Caco-2 (cell line): ENCODE measurements at regions of chr11 and their contacts with region 1.

Region 1: DNA sequence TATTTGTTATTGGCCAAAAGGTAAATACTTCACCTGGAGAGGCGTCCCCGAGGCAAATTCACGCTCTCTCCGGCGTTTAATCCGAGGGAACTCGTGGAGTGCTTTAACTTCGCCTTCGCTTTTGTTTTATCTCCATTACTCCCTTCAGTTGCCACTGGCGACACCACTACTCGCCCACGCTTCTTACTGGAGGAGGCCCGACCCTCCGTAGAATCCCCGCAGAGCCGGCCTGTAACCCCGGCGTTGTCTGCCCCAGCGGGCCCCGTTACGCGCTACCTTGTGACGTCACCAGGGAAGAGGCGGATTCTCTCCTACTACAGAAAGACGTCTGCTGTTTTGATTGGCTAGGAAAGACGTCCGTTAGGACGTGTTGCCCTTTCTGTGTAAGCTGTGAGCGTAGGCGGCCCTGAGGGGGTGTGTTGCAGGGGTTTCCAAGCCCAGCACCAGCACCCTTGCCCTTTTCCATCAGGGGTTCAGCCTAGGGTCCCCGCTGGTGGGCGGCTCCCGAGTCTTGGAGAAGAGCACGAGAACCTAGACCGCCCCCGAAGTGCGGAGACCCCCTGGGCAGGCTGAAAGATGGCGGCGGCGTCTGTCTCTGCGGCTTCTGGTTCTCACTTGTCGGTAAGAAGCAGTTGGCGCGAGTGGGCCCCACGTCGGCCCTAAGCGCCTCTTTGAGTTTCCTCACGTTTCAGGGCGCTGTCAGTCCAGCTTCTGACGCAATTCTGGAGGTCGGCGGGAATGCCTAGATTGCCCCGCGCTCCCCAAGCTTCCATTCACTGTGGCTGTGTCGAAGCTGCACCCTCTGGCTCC is at the start of gene CEP57:
- DNase-seq: peak; percentile 99
- H3K4me3 ChIP-seq: peak within 1 kb of the TSS; percentile 72
- H3K4me3 Mint-ChIP-seq: peak within 1 kb of the TSS; percentile 72
- H3K27ac Mint-ChIP-seq: peak within 1 kb of the TSS; percentile 100
- H3K4me1 ChIP-seq: peaks cover 19% of the 10 kb centered on the region; the same call in 1 of the 2 replicates
- H3K4me1 Mint-ChIP-seq: peaks cover 23% of the 10 kb centered on the region
- H3K27me3 ChIP-seq: no peaks in the 10 kb centered on the region
- H3K27me3 Mint-ChIP-seq: no peaks in the 10 kb centered on the region
- CTCF ChIP-seq: no peak
- total RNA-seq, gene CEP57: 117 and 125 TPM in 2 replicates

Region 2: DNA sequence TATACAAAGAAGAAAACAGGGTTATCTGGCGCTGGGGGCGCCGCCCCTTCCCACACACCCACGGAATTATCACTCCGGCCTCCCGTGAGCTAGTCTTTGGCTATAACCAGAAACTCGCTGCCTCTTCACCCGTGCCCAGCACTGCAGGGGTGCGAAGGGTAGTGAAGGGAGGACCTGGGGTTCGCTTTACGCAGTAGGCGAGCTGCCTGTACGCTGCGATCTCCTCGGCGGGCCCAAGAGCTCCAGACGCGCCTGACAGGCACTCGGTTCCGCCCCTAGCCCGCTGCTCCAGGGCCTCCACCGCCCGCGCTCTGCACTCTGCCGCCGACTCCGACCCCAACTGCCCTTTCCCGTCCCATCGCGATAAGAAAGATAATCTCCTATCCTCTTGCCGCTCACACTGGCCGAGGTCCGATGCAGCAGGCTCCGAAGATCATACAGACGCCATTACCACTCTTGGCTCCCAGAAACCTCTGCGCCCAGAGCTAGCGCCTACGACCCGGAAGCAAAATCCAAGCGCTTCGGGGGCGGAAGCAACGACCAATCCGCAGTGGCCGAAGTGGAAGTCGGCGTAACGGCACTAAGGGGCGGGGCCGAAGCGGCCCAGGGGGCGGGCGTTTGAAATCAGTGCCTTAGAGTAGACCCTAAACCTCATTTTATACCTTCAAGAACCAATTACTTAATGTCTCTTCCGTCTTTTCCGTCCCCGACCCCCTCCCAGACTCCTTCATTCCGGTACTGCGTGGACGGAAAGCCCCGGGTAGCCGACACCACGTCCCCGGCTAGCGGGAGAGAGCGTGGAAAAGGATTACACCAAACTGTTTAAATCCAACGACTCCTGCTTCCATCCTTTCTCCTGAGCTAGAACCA is 817.0 kb before region 1 on chr11 and contains the starts of genes CWC15 and KDM4D:
- CTCF ChIA-PET with region 1: no interaction called
- POLR2A ChIA-PET with region 1: interaction called, 8 read pairs
- intact Hi-C with region 1: loop called (anchors 2 kb)
- DNase-seq: peak; percentile 97
- H3K4me3 ChIP-seq: peak within 1 kb of the TSS; percentile 56
- H3K4me3 Mint-ChIP-seq: peak within 1 kb of the TSS; percentile 89
- H3K27ac Mint-ChIP-seq: peak within 1 kb of the TSS; percentile 94
- H3K4me1 ChIP-seq: peaks cover 9% of the 10 kb centered on the region; the same call in 1 of the 2 replicates
- H3K4me1 Mint-ChIP-seq: peaks cover 25% of the 10 kb centered on the region
- H3K27me3 ChIP-seq: no peaks in the 10 kb centered on the region
- H3K27me3 Mint-ChIP-seq: no peaks in the 10 kb centered on the region
- CTCF ChIP-seq: no peak
- total RNA-seq, gene CWC15: 137 and 144 TPM in 2 replicates
- total RNA-seq, gene KDM4D: 0.95 and 1.2 TPM in 2 replicates

Region 3: GRCh38 chr11:95429376-95429907 is 360.9 kb before region 1 on chr11:
- CTCF ChIA-PET with region 1: no interaction called
- POLR2A ChIA-PET with region 1: no interaction called
- intact Hi-C with region 1: no loop called
- DNase-seq: no peak
- H3K4me3 ChIP-seq: no peak overlapping the region
- H3K4me3 Mint-ChIP-seq: no peak overlapping the region
- H3K27ac Mint-ChIP-seq: no peak overlapping the region
- H3K4me1 ChIP-seq: no peaks in the 10 kb centered on the region
- H3K4me1 Mint-ChIP-seq: no peaks in the 10 kb centered on the region
- H3K27me3 ChIP-seq: no peaks in the 10 kb centered on the region
- H3K27me3 Mint-ChIP-seq: peaks cover 5% of the 10 kb centered on the region
- CTCF ChIP-seq: no peak

Region 4: GRCh38 chr11:95688580-95689189 is 101.6 kb before region 1 on chr11:
- CTCF ChIA-PET with region 1: no interaction called
- POLR2A ChIA-PET with region 1: no interaction called
- intact Hi-C with region 1: no loop called
- DNase-seq: no peak
- H3K4me3 ChIP-seq: no peak overlapping the region
- H3K4me3 Mint-ChIP-seq: no peak overlapping the region
- H3K27ac Mint-ChIP-seq: no peak overlapping the region
- H3K4me1 ChIP-seq: no peaks in the 10 kb centered on the region
- H3K4me1 Mint-ChIP-seq: no peaks in the 10 kb centered on the region
- H3K27me3 ChIP-seq: no peaks in the 10 kb centered on the region; the same call in 1 of the 2 replicates
- H3K27me3 Mint-ChIP-seq: no peaks in the 10 kb centered on the region
- CTCF ChIP-seq: no peak

Region 5: GRCh38 chr11:95698676-95699557 is 91.4 kb before region 1 on chr11:
- CTCF ChIA-PET with region 1: no interaction called
- POLR2A ChIA-PET with region 1: no interaction called
- intact Hi-C with region 1: no loop called
- DNase-seq: no peak
- H3K4me3 ChIP-seq: no peak overlapping the region
- H3K4me3 Mint-ChIP-seq: no peak overlapping the region
- H3K27ac Mint-ChIP-seq: no peak overlapping the region
- H3K4me1 ChIP-seq: peaks cover 8% of the 10 kb centered on the region
- H3K4me1 Mint-ChIP-seq: no peaks in the 10 kb centered on the region
- H3K27me3 ChIP-seq: no peaks in the 10 kb centered on the region
- H3K27me3 Mint-ChIP-seq: no peaks in the 10 kb centered on the region
- CTCF ChIP-seq: no peak

Region 6: GRCh38 chr11:96424693-96425092 is 634.4 kb after region 1 on chr11:
- CTCF ChIA-PET with region 1: interaction called, 5 read pairs
- POLR2A ChIA-PET with region 1: no interaction called
- intact Hi-C with region 1: loop called (anchors 2 kb)
- DNase-seq: no peak
- H3K4me3 ChIP-seq: no peak overlapping the region
- H3K4me3 Mint-ChIP-seq: no peak overlapping the region
- H3K27ac Mint-ChIP-seq: no peak overlapping the region
- H3K4me1 ChIP-seq: peaks cover 5% of the 10 kb centered on the region; the same call in 1 of the 2 replicates
- H3K4me1 Mint-ChIP-seq: no peaks in the 10 kb centered on the region
- H3K27me3 ChIP-seq: no peaks in the 10 kb centered on the region; the same call in 1 of the 2 replicates
- H3K27me3 Mint-ChIP-seq: peaks cover 19% of the 10 kb centered on the region
- CTCF ChIP-seq: no peak